ENCODE measurements at regions of chr3 and their contacts with region 1.

Region 1: GRCh38 chr3:94069194-94069813 is 6.4 kb downstream of the NSUN3 start:
- DNase-seq: peak in 3 of 5 donors; percentile 13 to 34 (median 27)
- H3K4me3 ChIP-seq: no peak overlapping the region
- H3K4me3 Mint-ChIP-seq: no peak overlapping the region
- H3K27ac ChIP-seq: no peak overlapping the region
- H3K27ac Mint-ChIP-seq: peak overlapping the region in 3 of 7 donors; percentile 6 to 36 (median 30)
- H3K4me1 ChIP-seq: peaks cover 47% of the 10 kb centered on the region
- H3K4me1 Mint-ChIP-seq: peaks cover 38 to 73% (median 60%) of the 10 kb centered on the region in 4 donors
- H3K27me3 ChIP-seq: no peaks in the 10 kb centered on the region
- H3K27me3 Mint-ChIP-seq: no peaks in the 10 kb centered on the region

Region 2: GRCh38 chr3:94036909-94037507 is 32.3 kb before region 1 on chr3:
- CTCF ChIA-PET with region 1: interaction called, 12 read pairs
- POLR2A ChIA-PET with region 1: no interaction called
- intact Hi-C with region 1: no loop called
- DNase-seq: no peak
- H3K4me3 ChIP-seq: no peak overlapping the region
- H3K4me3 Mint-ChIP-seq: no peak overlapping the region
- H3K27ac ChIP-seq: no peak overlapping the region
- H3K27ac Mint-ChIP-seq: peak overlapping the region in 1 of 7 donors; percentile 53
- H3K4me1 ChIP-seq: no peaks in the 10 kb centered on the region
- H3K4me1 Mint-ChIP-seq: no peaks in the 10 kb centered on the region
- H3K27me3 ChIP-seq: no peaks in the 10 kb centered on the region
- H3K27me3 Mint-ChIP-seq: no peaks in the 10 kb centered on the region

Region 3: GRCh38 chr3:94049267-94049666 is 20.0 kb before region 1 on chr3:
- CTCF ChIA-PET with region 1: interaction called, 11 read pairs
- POLR2A ChIA-PET with region 1: no interaction called
- intact Hi-C with region 1: no loop called
- DNase-seq: no peak
- H3K4me3 ChIP-seq: no peak overlapping the region
- H3K4me3 Mint-ChIP-seq: no peak overlapping the region
- H3K27ac ChIP-seq: no peak overlapping the region
- H3K27ac Mint-ChIP-seq: no peak overlapping the region
- H3K4me1 ChIP-seq: no peaks in the 10 kb centered on the region
- H3K4me1 Mint-ChIP-seq: no peaks in the 10 kb centered on the region
- H3K27me3 ChIP-seq: no peaks in the 10 kb centered on the region
- H3K27me3 Mint-ChIP-seq: no peaks in the 10 kb centered on the region

Region 4: DNA sequence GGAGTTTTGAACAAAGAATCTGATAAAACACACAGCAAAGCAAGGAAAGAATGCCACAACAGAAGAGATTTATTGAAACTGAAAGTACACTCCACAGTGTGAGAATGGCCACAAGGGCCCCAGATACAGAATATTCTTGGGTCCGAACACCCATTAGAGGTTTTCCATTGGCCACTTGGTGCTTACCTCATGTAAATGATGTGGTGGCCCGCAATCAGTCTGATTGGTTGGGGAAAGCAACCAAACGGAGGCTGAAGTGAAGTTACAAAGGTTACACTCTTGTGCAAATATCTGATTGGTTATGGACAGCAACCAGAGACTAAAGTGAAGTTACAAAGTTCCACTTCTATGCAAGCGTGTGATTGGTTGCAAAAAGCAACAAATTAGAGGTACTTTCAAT is 14.0 kb after region 1 on chr3:
- CTCF ChIA-PET with region 1: interaction called, 28 read pairs
- POLR2A ChIA-PET with region 1: no interaction called
- intact Hi-C with region 1: no loop called
- DNase-seq: no peak
- H3K4me3 ChIP-seq: no peak overlapping the region
- H3K4me3 Mint-ChIP-seq: no peak overlapping the region
- H3K27ac ChIP-seq: no peak overlapping the region
- H3K27ac Mint-ChIP-seq: peak overlapping the region in 3 of 7 donors; percentile 6 to 74 (median 53)
- H3K4me1 ChIP-seq: peaks cover 26% of the 10 kb centered on the region
- H3K4me1 Mint-ChIP-seq: peaks cover 35 to 46% (median 38%) of the 10 kb centered on the region in 4 donors
- H3K27me3 ChIP-seq: no peaks in the 10 kb centered on the region
- H3K27me3 Mint-ChIP-seq: no peaks in the 10 kb centered on the region

Measured in CD4-positive, alpha-beta memory T cell (primary cell).